Activated B cell treated with CpG ODN at 0.5 μM for 24 hours (primary cell): ENCODE measurements at regions of chr12 and their contacts with region 1.

Region 1: GRCh38 chr12:42237052-42237852 is 796 bp downstream of the YAF2 start:
- DNase-seq: peak; percentile 69
- ATAC-seq: peak; percentile 78
- H3K4me3 Mint-ChIP-seq: peak overlapping the region; percentile 93
- H3K27ac Mint-ChIP-seq: peak overlapping the region; percentile 92
- H3K4me1 Mint-ChIP-seq: peaks cover 37% of the 10 kb centered on the region
- H3K27me3 Mint-ChIP-seq: no peaks in the 10 kb centered on the region
- CTCF ChIP-seq: no peak

Region 2: GRCh38 chr12:42186793-42187192 is 50.5 kb before region 1 on chr12:
- CTCF ChIA-PET with region 1: no interaction called
- POLR2A ChIA-PET with region 1: no interaction called
- intact Hi-C with region 1: loop called (anchors 5 kb)
- DNase-seq: no peak
- ATAC-seq: peak; percentile 92
- H3K4me3 Mint-ChIP-seq: no peak overlapping the region
- H3K27ac Mint-ChIP-seq: no peak overlapping the region
- H3K4me1 Mint-ChIP-seq: peaks cover 46% of the 10 kb centered on the region
- H3K27me3 Mint-ChIP-seq: no peaks in the 10 kb centered on the region
- CTCF ChIP-seq: no peak

Region 3: GRCh38 chr12:42372154-42372791 is 135.0 kb after region 1 on chr12:
- CTCF ChIA-PET with region 1: no interaction called
- POLR2A ChIA-PET with region 1: no interaction called
- intact Hi-C with region 1: loop called (anchors 1 kb)
- DNase-seq: no peak
- ATAC-seq: peak; percentile 94
- H3K4me3 Mint-ChIP-seq: no peak overlapping the region
- H3K27ac Mint-ChIP-seq: no peak overlapping the region
- H3K4me1 Mint-ChIP-seq: peaks cover 16% of the 10 kb centered on the region
- H3K27me3 Mint-ChIP-seq: no peaks in the 10 kb centered on the region
- CTCF ChIP-seq: peak; percentile 30

Region 4: DNA sequence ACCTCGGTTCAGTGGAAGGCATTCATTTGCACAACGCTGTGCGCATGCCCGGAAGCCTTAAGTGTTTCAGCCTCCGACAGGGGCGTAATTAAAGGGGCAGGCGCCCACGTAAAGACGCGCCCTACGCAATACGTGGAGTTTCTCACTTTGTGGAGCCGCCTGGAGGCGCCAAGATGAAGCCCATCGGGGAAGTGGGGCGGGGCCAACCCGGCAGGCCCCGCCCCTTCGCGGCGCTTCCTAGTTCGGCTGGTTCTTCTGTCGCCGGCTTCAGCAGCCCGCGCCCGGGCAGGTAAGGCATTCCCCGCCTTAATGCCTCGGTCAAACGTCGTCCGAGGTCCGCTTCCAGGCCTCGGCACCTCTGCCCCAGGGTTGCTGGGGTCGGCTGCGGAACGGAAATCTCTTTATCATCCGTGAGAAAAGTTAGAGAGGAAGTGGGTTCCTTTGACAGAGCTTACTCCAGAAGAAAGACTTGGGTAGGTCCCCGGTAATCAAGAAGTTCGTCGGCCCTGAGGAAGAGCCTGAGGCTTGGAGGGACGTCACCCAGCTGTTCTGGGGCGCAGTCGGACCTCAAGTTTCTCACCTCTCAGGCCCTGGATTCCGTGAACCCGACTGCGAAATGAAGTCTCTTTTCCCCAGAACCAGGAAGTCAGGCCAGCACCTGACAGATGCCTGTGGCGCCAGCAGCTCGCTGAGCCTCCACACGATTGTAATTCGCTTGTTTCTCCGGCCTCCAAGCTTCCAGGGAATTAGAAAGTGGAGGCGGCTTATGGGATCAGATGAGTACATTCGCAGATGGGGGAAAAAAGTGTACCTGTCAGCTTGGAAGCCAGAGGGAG is 1521.7 kb after region 1 on chr12 and contains the starts of genes IRAK4 and PUS7L:
- CTCF ChIA-PET with region 1: no interaction called
- POLR2A ChIA-PET with region 1: no interaction called
- intact Hi-C with region 1: loop called (anchors 2 kb)
- DNase-seq: peak; percentile 83
- ATAC-seq: peak; percentile 98
- H3K4me3 Mint-ChIP-seq: peak within 1 kb of the TSS; percentile 98
- H3K27ac Mint-ChIP-seq: peak within 1 kb of the TSS; percentile 97
- H3K4me1 Mint-ChIP-seq: peaks cover 68% of the 10 kb centered on the region
- H3K27me3 Mint-ChIP-seq: no peaks in the 10 kb centered on the region
- CTCF ChIP-seq: no peak
- total RNA-seq, gene IRAK4: 38.4 and 40.8 TPM in 2 replicates
- total RNA-seq, gene PUS7L: 16.1 and 19.9 TPM in 2 replicates